Sigmoid colon (tissue), 7 donors: ENCODE measurements at regions of chr7 and their contacts with region 1.

Region 1: GRCh38 chr7:41940760-41941343 is 238.0 kb upstream of the INHBA start:
- DNase-seq: peak; percentile 83
- H3K4me3 ChIP-seq: no peak overlapping the region
- H3K27ac ChIP-seq: no peak overlapping the region
- H3K4me1 ChIP-seq: peaks cover 0 to 28% (median 20%) of the 10 kb centered on the region in 4 donors
- H3K27me3 ChIP-seq: no peaks in the 10 kb centered on the region
- CTCF ChIP-seq: peak; percentile 66 to 88 (median 82)
- EP300 ChIP-seq: no peak
- POLR2A ChIP-seq: no peak

Region 2: GRCh38 chr7:41824284-41824683 is 116.6 kb before region 1 on chr7:
- intact Hi-C with region 1: no loop called
- DNase-seq: no peak
- H3K4me3 ChIP-seq: no peak overlapping the region
- H3K27ac ChIP-seq: no peak overlapping the region
- H3K4me1 ChIP-seq: no peaks in the 10 kb centered on the region
- H3K27me3 ChIP-seq: no peaks in the 10 kb centered on the region
- CTCF ChIP-seq: no peak
- EP300 ChIP-seq: no peak
- POLR2A ChIP-seq: no peak

Region 3: DNA sequence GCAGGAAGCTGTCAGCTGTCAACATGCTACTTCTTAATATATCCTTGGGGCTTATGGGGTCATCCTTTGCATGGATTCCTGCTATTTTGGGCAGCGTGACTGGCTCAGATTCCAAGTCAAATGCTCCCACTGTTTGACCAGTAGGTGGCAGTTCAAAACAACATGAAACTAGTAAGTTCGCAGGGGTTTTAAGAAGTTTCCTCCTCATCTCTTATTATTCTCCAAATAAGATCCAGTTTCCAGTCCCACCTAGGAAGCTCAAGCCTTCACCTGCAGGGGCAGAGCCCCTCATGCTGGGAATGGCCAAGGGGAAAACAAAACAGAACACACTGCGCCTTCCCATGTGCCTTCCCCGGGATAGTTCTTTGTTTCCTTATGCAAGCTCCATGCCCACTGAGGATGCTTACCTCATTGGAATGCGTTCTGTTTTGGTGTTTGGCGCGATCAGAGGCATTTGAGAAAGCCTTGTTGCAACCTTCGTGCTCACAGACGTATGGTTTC is 36.3 kb after region 1 on chr7:
- intact Hi-C with region 1: loop called (anchors 2 kb)
- DNase-seq: no peak
- H3K4me3 ChIP-seq: no peak overlapping the region
- H3K27ac ChIP-seq: peak overlapping the region in 3 of 4 donors; percentile 58 to 70 (median 65)
- H3K4me1 ChIP-seq: peaks cover 0 to 56% (median 52%) of the 10 kb centered on the region in 4 donors
- H3K27me3 ChIP-seq: no peaks in the 10 kb centered on the region
- CTCF ChIP-seq: peak; percentile 55 to 79 (median 62)
- EP300 ChIP-seq: no peak
- POLR2A ChIP-seq: no peak

Region 4: DNA sequence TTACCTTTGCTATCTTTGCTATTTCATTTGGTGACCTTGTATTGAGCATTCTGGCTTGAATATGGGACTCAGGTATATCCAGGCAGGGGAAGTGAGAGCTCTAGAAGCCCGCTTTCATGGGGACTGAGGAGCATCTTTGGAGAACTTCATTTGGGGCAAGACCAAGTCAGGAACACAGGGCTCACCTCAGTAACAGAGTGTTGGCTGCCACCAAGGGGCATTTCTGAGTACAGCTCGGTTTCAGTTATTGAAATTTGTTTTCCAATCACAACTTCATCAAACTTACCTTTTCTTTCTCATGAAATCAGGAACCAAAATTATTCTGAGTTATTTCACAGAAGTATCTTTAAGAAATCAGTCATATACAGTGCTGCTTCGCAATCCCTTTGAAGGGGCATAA is 633.8 kb after region 1 on chr7:
- intact Hi-C with region 1: loop called (anchors 2 kb)
- DNase-seq: no peak
- H3K4me3 ChIP-seq: no peak overlapping the region
- H3K27ac ChIP-seq: peak overlapping the region in 3 of 4 donors; percentile 53 to 74 (median 68)
- H3K4me1 ChIP-seq: peaks cover 0 to 58% (median 45%) of the 10 kb centered on the region in 4 donors
- H3K27me3 ChIP-seq: no peaks in the 10 kb centered on the region
- CTCF ChIP-seq: peak in 3 of 4 experiments; percentile 13 to 30 (median 29)
- EP300 ChIP-seq: no peak
- POLR2A ChIP-seq: no peak

Region 5: GRCh38 chr7:42831718-42832431 is 891.0 kb after region 1 on chr7:
- intact Hi-C with region 1: loop called (anchors 2 kb)
- DNase-seq: peak; percentile 80
- H3K4me3 ChIP-seq: no peak overlapping the region
- H3K27ac ChIP-seq: peak overlapping the region in 3 of 4 donors; percentile 40 to 69 (median 65)
- H3K4me1 ChIP-seq: peaks cover 0 to 26% (median 20%) of the 10 kb centered on the region in 4 donors
- H3K27me3 ChIP-seq: no peaks in the 10 kb centered on the region
- CTCF ChIP-seq: peak; percentile 55 to 76 (median 72)
- EP300 ChIP-seq: no peak
- POLR2A ChIP-seq: no peak

Region 6: DNA sequence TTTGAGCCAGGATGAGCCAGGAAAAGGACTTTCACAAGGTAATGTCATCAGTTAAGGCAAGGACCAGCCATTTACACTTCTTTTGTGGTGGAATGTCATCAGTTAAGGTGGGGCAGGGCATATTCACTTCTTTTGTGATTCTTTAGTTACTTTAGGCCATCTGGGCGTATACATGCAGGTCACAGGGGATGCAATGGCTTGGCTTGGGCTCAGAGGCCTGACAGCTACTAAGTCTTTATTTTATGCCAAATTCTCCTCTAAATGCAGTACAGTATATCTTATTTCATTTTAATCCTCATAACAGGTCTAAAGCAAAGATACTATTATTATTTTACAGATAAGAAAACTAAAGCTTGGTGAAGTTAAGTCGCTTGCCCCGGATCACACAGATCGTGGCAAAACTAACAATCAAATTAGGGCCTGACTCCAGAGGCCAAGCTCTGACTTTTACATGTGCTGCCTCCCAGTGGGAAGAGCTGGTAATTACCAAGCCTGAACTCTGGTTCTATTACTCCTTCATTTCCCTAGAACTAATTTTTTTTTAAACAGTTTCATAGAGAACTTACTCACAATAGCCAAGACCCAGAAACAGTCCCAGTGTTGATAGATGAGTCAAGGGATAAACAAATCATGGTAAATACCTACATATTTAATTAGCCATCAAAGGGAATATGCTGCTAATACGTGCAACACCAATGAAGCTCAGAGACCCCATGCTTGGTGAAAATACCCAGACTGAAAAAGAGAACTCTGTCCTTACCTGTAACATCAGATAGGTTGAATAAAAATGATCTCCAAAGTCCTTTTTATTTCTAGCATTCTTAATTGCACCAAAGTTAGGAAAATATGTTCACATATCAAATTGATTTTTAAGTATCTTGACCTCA is 935.6 kb after region 1 on chr7:
- intact Hi-C with region 1: loop called (anchors 2 kb)
- DNase-seq: peak; percentile 73
- H3K4me3 ChIP-seq: no peak overlapping the region
- H3K27ac ChIP-seq: no peak overlapping the region
- H3K4me1 ChIP-seq: no peaks in the 10 kb centered on the region
- H3K27me3 ChIP-seq: no peaks in the 10 kb centered on the region
- CTCF ChIP-seq: peak; percentile 45 to 73 (median 62)
- EP300 ChIP-seq: no peak
- POLR2A ChIP-seq: no peak

Region 7: GRCh38 chr7:43248961-43249822 is 1308.3 kb after region 1 on chr7:
- intact Hi-C with region 1: loop called (anchors 10 kb)
- DNase-seq: peak; percentile 73
- H3K4me3 ChIP-seq: peak overlapping the region; percentile 11 to 29 (median 18)
- H3K27ac ChIP-seq: peak overlapping the region in 3 of 4 donors; percentile 10 to 55 (median 32)
- H3K4me1 ChIP-seq: peaks cover 0 to 16% (median 11%) of the 10 kb centered on the region in 4 donors
- H3K27me3 ChIP-seq: no peaks in the 10 kb centered on the region
- CTCF ChIP-seq: no peak
- EP300 ChIP-seq: no peak
- POLR2A ChIP-seq: no peak